ENCODE measurements at regions of chr11 and their contacts with region 1.

Region 1: GRCh38 chr11:110200241-110200640 is 96.2 kb downstream of the RDX start:
- DNase-seq: no peak
- ATAC-seq: no peak

Region 2: DNA sequence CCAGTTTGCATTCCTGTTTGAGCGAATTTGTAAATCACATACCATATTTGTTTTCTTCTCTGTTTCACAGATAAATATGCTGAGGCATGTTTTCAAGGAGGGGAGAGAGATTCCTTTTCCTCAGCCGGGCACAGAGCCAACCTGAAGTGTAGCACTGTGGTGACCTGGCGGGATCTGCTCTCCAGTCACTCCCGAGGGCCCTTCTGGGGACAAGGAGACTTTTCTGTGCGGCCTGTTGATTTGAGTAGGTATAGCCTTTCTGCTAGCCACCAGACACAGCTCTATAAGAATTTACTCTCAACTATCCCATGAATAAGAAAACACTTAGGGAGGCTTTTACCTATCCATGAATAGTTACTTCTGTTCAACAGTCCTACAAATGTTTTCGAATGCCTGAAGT is 166.1 kb after region 1 on chr11:
- intact Hi-C with region 1: loop called (anchors 5 kb)
- DNase-seq: peak; percentile 75
- ATAC-seq: peak; percentile 68

Region 3: DNA sequence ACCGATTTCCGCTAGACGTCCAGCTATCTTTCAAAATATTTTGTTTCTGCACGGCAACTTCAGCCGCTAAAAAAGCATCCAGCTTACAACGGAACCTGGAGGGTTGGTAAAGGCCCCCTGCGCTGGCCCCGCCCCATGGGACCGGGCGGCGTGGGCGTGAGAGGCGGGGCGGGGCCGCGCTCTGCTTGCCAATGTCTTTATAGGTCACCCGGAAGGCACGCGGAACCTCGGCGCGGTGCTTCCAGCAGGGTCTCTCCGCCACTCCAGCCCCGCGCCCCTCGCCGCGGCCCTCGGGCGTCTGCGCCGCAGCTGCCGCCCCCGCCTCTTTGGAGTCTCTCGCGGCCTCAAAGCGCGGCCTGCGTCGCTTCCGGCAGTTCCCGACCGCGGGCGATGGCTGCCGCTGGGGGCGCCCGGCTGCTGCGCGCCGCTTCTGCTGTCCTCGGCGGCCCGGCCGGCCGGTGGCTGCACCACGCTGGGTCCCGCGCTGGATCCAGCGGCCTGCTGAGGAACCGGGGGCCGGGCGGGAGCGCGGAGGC is 229.6 kb after region 1 on chr11 and contains the start of gene FDX1:
- intact Hi-C with region 1: loop called (anchors 10 kb)
- DNase-seq: peak; percentile 86
- ATAC-seq: peak; percentile 87
- total RNA-seq, gene FDX1: 10.5 TPM